T-cell (primary cell): ENCODE measurements at regions of chr13 and their contacts with region 1.

Region 1: DNA sequence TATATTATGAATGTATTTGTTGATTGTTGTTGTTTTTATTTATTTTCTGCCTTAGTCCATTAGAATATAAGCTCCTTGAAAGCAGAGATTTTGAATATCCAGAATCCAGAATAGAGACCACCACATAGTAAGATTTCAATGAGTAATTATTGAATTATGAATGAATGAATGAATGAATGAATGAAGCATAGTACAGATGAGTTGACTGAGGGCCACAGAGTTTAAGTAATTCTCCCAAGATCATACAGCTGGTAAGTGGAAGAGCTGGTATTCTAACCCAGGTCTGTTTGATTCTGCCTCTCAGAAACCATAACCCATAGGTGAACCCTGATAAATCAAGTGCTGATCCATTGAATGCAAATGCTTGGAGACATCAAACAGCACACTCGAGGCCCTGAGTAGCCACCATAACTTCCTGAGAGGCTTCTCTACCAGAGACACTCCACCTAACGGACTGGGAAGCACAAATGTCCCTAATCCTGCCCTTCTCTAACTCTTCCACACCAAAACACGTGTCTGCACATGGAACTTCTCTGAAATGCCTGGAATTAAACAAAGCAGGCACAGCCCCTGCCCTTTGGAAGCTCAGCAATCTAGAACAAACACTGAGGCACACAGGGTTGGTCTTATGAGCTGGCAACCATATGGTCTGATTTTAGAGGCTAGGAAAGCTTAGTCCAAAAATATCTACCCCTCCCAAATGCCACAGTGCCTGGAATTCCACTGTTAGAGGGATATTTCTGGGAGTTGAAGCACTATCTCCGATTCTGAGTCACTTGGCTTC is 190.1 kb downstream of the FOXO1 start:
- DNase-seq: no peak
- ATAC-seq: no peak
- H3K4me3 ChIP-seq: no peak overlapping the region
- H3K4me3 Mint-ChIP-seq: no peak overlapping the region
- H3K27ac ChIP-seq: no peak overlapping the region
- H3K27ac Mint-ChIP-seq: no peak overlapping the region
- H3K4me1 ChIP-seq: peaks cover 11 to 20% of the 10 kb centered on the region in 2 experiments
- H3K4me1 Mint-ChIP-seq: peaks cover 39 to 61% (median 42%) of the 10 kb centered on the region in 3 donors
- H3K27me3 ChIP-seq: no peaks in the 10 kb centered on the region
- H3K27me3 Mint-ChIP-seq: no peaks in the 10 kb centered on the region

Region 2: GRCh38 chr13:40102856-40103255 is 373.5 kb before region 1 on chr13:
- CTCF ChIA-PET with region 1: interaction called in 1 of 2 experiments, 13 read pairs
- POLR2A ChIA-PET with region 1: no interaction called
- DNase-seq: peak in 17 of 35 experiments; percentile 1 to 45 (median 11)
- ATAC-seq: peak; percentile 58 to 89 (median 84)
- H3K4me3 ChIP-seq: no peak overlapping the region
- H3K4me3 Mint-ChIP-seq: peak overlapping the region in 1 of 3 donors; percentile 15
- H3K27ac ChIP-seq: no peak overlapping the region
- H3K27ac Mint-ChIP-seq: peak overlapping the region; percentile 75 to 86
- H3K4me1 ChIP-seq: peaks cover 0 to 11% of the 10 kb centered on the region in 2 experiments
- H3K4me1 Mint-ChIP-seq: peaks cover 15 to 25% (median 24%) of the 10 kb centered on the region in 3 donors
- H3K27me3 ChIP-seq: peaks cover 0 to 3% of the 10 kb centered on the region in 2 experiments
- H3K27me3 Mint-ChIP-seq: no peaks in the 10 kb centered on the region

Region 3: GRCh38 chr13:40639221-40639681 is 162.9 kb after region 1 on chr13:
- CTCF ChIA-PET with region 1: no interaction called
- POLR2A ChIA-PET with region 1: interaction called in 1 of 2 experiments, 14 read pairs
- DNase-seq: no peak
- ATAC-seq: no peak
- H3K4me3 ChIP-seq: no peak overlapping the region
- H3K4me3 Mint-ChIP-seq: peak overlapping the region in 2 of 3 donors; percentile 29 to 63
- H3K27ac ChIP-seq: no peak overlapping the region
- H3K27ac Mint-ChIP-seq: peak overlapping the region; percentile 62 to 75
- H3K4me1 ChIP-seq: peaks cover 29 to 58% of the 10 kb centered on the region in 2 experiments
- H3K4me1 Mint-ChIP-seq: peaks cover 87 to 91% (median 91%) of the 10 kb centered on the region in 3 donors
- H3K27me3 ChIP-seq: no peaks in the 10 kb centered on the region
- H3K27me3 Mint-ChIP-seq: no peaks in the 10 kb centered on the region